Cardiac septum (tissue), 1 donor: ENCODE measurements at regions of chr11 and their contacts with region 1.

Region 1: GRCh38 chr11:49221112-49221511 is 12.7 kb upstream of the FOLH1 start:
- DNase-seq: no peak

Region 2: DNA sequence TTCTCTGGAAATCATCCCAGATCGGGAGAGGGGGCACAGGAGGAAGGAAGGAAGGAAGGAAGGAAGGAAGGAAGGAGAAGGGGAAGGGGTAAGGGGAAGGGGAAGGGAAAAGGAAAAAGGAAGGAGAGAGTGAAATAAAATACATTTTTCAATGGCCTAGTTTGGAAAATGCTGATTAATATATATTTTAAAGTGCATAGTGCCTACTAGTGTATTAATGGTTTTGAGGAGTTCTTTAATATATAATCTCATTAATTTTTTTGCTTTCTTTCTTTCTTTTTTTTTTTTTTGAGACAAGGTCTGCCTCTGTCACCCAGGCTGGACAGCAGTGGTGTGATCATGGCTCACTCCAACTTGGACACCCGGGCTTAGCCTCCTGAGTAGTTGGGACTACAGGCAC is 95.1 kb after region 1 on chr11:
- intact Hi-C with region 1: no loop called
- DNase-seq: no peak

Region 3: DNA sequence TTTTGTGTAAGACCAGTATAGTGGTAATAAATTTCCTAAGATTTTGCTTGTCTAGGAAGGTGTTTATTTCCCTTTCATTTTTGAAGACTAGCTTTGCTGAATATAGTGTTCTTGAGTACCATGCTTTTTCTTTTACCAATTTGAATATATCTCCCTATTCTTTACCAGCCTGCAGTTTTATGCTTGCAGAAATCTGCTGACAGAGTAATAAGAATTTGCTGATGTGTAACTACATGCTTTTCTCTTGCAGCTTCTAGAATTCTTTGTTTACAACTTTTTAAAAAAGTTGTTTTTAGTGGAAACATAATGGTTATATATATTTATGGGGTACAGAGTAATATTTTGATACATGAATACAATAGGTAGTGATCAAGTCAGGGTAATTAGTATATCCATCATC is 312.1 kb after region 1 on chr11:
- intact Hi-C with region 1: loop called (anchors 10 kb)
- DNase-seq: no peak